ENCODE measurements at regions of chr2 and their contacts with region 1.

Region 1: DNA sequence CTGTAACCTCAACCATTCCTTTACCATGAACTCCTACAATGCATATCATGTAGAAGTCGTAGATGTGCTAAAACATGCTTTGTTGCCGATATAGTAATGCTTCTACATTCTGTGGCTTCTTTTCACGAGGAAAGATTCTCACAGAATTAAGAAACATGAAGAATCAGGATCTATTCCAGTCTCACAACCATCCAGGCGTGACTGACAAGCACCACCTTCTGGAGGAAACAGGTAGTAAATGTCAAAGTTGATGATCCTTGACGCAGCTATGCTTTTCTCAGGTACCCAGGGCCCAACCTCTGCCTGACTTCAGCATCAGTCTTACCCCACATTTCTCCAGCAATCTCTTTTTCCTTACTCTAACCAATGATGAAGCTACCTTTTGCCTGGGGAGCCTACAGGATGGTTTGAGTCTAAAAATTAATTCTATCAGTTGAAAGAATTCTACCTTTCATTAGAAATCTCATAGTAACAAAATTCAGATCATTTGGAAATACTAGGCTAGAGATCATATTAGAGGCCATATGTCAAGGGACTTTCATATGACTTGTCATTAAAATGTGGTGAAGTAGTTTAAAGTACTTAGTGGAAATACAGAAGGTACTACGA is 123.3 kb upstream of the RND3 start:
- DNase-seq: no peak
- H3K4me3 Mint-ChIP-seq: no peak overlapping the region
- H3K27ac Mint-ChIP-seq: no peak overlapping the region
- H3K4me1 Mint-ChIP-seq: no peaks in the 10 kb centered on the region
- H3K27me3 Mint-ChIP-seq: no peaks in the 10 kb centered on the region

Region 2: GRCh38 chr2:150595803-150596470 is 14.8 kb before region 1 on chr2:
- intact Hi-C with region 1: loop called (anchors 1 kb)
- DNase-seq: no peak
- H3K4me3 Mint-ChIP-seq: no peak overlapping the region
- H3K27ac Mint-ChIP-seq: no peak overlapping the region
- H3K4me1 Mint-ChIP-seq: no peaks in the 10 kb centered on the region
- H3K27me3 Mint-ChIP-seq: peaks cover 4% of the 10 kb centered on the region

Region 3: GRCh38 chr2:150674283-150674682 is 63.5 kb after region 1 on chr2:
- intact Hi-C with region 1: no loop called
- DNase-seq: no peak
- H3K4me3 Mint-ChIP-seq: no peak overlapping the region
- H3K27ac Mint-ChIP-seq: no peak overlapping the region
- H3K4me1 Mint-ChIP-seq: no peaks in the 10 kb centered on the region
- H3K27me3 Mint-ChIP-seq: no peaks in the 10 kb centered on the region